ENCODE measurements at regions of chr11 and their contacts with region 1.

Region 1: GRCh38 chr11:43643898-43644620 is 36.5 kb upstream of the HSD17B12 start:
- DNase-seq: peak; percentile 80 to 96 (median 90)

Region 2: GRCh38 chr11:43680521-43681400 is 36.7 kb after region 1 on chr11 and contains the start of gene HSD17B12:
- intact Hi-C with region 1: loop called (anchors 2 kb)
- DNase-seq: peak; percentile 96 to 100 (median 100)

Region 3: DNA sequence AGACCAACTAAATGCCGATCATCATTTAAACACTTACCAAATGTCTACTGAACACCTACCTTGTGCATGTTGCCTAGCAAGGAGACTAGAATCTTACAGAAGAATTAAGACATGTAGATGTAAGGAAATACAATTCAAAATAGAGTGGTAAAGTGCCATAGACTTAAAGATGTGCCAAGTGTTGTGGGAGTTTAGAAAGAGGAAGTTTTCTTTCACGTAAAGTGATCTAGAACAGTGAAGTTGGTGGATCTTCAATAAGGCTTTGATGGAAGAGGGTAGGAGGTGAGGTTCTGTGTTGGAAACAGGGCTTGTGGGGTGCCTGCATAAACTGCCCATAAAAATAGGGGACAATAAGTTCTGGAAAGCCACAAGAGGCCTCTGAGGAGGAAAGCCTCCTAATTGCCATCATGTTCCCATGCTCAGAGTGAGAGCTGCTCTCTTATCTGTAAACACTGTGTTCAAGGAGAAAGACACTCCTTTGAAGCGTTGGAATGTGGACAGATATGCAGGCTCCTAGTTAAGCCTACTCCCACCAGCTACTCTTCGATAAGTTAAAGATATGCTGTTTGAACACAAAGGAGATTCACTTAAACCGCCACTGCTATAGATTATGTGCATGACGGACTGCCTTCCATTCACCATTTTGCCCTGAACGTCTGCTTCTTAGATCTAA is 103.2 kb after region 1 on chr11:
- intact Hi-C with region 1: no loop called
- DNase-seq: no peak